ENCODE measurements at regions of chr6 and their contacts with region 1.

Region 1: GRCh38 chr6:89080542-89081422 is at the start of gene PNRC1:
- DNase-seq: peak; percentile 100
- H3K4me3 Mint-ChIP-seq: peak within 1 kb of the TSS; percentile 93
- H3K27ac Mint-ChIP-seq: peak within 1 kb of the TSS; percentile 99
- H3K4me1 Mint-ChIP-seq: peaks cover 30% of the 10 kb centered on the region
- H3K27me3 Mint-ChIP-seq: no peaks in the 10 kb centered on the region
- total RNA-seq, gene PNRC1: 110 to 111 TPM

Region 2: GRCh38 chr6:87322304-87323212 is 1758.2 kb before region 1 on chr6 and contains the start of gene SMIM8:
- CTCF ChIA-PET with region 1: no interaction called
- intact Hi-C with region 1: loop called (anchors 10 kb)
- DNase-seq: peak; percentile 86
- H3K4me3 Mint-ChIP-seq: peak within 1 kb of the TSS; percentile 98
- H3K27ac Mint-ChIP-seq: peak within 1 kb of the TSS; percentile 85
- H3K4me1 Mint-ChIP-seq: peaks cover 18% of the 10 kb centered on the region
- H3K27me3 Mint-ChIP-seq: no peaks in the 10 kb centered on the region
- total RNA-seq, gene SMIM8: 8.0 to 8.6 TPM

Region 3: GRCh38 chr6:88963139-88964090 is 117.4 kb before region 1 on chr6 and contains the start of gene RNGTT:
- CTCF ChIA-PET with region 1: interaction called, 3 read pairs
- intact Hi-C with region 1: loop called (anchors 1 kb)
- DNase-seq: peak; percentile 99
- H3K4me3 Mint-ChIP-seq: peak within 1 kb of the TSS; percentile 99
- H3K27ac Mint-ChIP-seq: peak within 1 kb of the TSS; percentile 87
- H3K4me1 Mint-ChIP-seq: peaks cover 34% of the 10 kb centered on the region
- H3K27me3 Mint-ChIP-seq: no peaks in the 10 kb centered on the region
- total RNA-seq, gene RNGTT: 21.7 to 23.5 TPM

Region 4: GRCh38 chr6:89117211-89118108 is 36.7 kb after region 1 on chr6 and contains the start of gene SRSF12:
- CTCF ChIA-PET with region 1: interaction called, 7 read pairs
- intact Hi-C with region 1: loop called (anchors 1 kb)
- DNase-seq: peak; percentile 37
- H3K4me3 Mint-ChIP-seq: peak within 1 kb of the TSS; percentile 78
- H3K27ac Mint-ChIP-seq: no peak within 1 kb of the TSS
- H3K4me1 Mint-ChIP-seq: peaks cover 5% of the 10 kb centered on the region
- H3K27me3 Mint-ChIP-seq: peaks cover 5% of the 10 kb centered on the region
- total RNA-seq, gene SRSF12: 0.15 TPM in 1 of 2 experiments, not detected in the other

Region 5: GRCh38 chr6:89412071-89413005 is 331.6 kb after region 1 on chr6 and contains the start of gene RRAGD:
- CTCF ChIA-PET with region 1: no interaction called
- intact Hi-C with region 1: loop called (anchors 2 kb)
- DNase-seq: peak; percentile 67
- H3K4me3 Mint-ChIP-seq: peak within 1 kb of the TSS; percentile 91
- H3K27ac Mint-ChIP-seq: peak within 1 kb of the TSS; percentile 31
- H3K4me1 Mint-ChIP-seq: peaks cover 23% of the 10 kb centered on the region
- H3K27me3 Mint-ChIP-seq: peaks cover 4% of the 10 kb centered on the region
- total RNA-seq, gene RRAGD: 11.3 to 13.2 TPM

Region 6: GRCh38 chr6:90403489-90404381 is 1323.0 kb after region 1 on chr6:
- CTCF ChIA-PET with region 1: no interaction called
- intact Hi-C with region 1: loop called (anchors 10 kb)
- DNase-seq: no peak
- H3K4me3 Mint-ChIP-seq: peak overlapping the region; percentile 57
- H3K27ac Mint-ChIP-seq: peak overlapping the region; percentile 87
- H3K4me1 Mint-ChIP-seq: peaks cover 86% of the 10 kb centered on the region
- H3K27me3 Mint-ChIP-seq: no peaks in the 10 kb centered on the region

Measured in activated naive CD4-positive, alpha-beta T cell treated with anti-CD3 and anti-CD28 coated beads for 36 hours (primary cell).